A673 (cell line): ENCODE measurements at regions of chr17 and their contacts with region 1.

Region 1: DNA sequence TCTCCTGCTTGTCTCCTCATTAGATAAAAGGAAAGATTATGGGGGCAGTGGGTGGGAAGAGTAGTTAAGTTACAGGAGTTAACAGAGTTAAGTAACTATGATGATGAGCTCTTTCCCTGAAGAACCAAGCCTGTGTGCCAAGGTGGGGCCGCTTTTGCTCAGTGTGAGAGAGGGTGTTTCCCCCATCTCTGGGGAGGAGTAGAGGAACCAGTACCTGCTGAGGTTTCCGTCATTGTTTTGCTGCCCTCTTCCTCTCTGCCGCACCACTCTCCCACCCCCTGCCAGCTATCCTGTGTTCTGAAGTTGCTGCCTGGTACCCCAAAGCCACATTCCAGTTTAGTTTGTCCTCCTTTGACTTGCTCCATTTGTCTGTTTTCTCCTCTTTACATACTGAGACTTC is 20.8 kb upstream of the KRT10 start:
- DNase-seq: no peak
- H3K4me3 ChIP-seq: no peak overlapping the region
- H3K27ac ChIP-seq: no peak overlapping the region
- H3K4me1 ChIP-seq: no peaks in the 10 kb centered on the region
- H3K27me3 ChIP-seq: no peaks in the 10 kb centered on the region
- CTCF ChIP-seq: no peak

Region 2: GRCh38 chr17:40121181-40122135 is 721.8 kb before region 1 on chr17 and contains the start of gene MSL1:
- CTCF ChIA-PET with region 1: no interaction called
- POLR2A ChIA-PET with region 1: interaction called, 11 read pairs
- intact Hi-C with region 1: no loop called
- DNase-seq: peak; percentile 71
- H3K4me3 ChIP-seq: peak within 1 kb of the TSS; percentile 96
- H3K27ac ChIP-seq: peak within 1 kb of the TSS; percentile 91
- H3K4me1 ChIP-seq: no peaks in the 10 kb centered on the region
- H3K27me3 ChIP-seq: no peaks in the 10 kb centered on the region
- CTCF ChIP-seq: no peak
- total RNA-seq, gene MSL1: 56.9 and 59.9 TPM in 2 replicates